CD4-positive, alpha-beta T cell (primary cell): ENCODE measurements at regions of chr5 and their contacts with region 1.

Region 1: GRCh38 chr5:40367255-40367654 is 312.5 kb upstream of the PTGER4 start:
- DNase-seq: peak in 5 of 14 experiments; percentile 19 to 74 (median 43)
- ATAC-seq: peak; percentile 66
- H3K4me3 ChIP-seq: no peak overlapping the region
- H3K4me3 Mint-ChIP-seq: no peak overlapping the region
- H3K27ac ChIP-seq: no peak overlapping the region
- H3K27ac Mint-ChIP-seq: peak overlapping the region; percentile 17
- H3K4me1 ChIP-seq: no peaks in the 10 kb centered on the region
- H3K4me1 Mint-ChIP-seq: peaks cover 7% of the 10 kb centered on the region
- H3K27me3 ChIP-seq: no peaks in the 10 kb centered on the region
- H3K27me3 Mint-ChIP-seq: no peaks in the 10 kb centered on the region
- CTCF ChIP-seq: no peak

Region 2: DNA sequence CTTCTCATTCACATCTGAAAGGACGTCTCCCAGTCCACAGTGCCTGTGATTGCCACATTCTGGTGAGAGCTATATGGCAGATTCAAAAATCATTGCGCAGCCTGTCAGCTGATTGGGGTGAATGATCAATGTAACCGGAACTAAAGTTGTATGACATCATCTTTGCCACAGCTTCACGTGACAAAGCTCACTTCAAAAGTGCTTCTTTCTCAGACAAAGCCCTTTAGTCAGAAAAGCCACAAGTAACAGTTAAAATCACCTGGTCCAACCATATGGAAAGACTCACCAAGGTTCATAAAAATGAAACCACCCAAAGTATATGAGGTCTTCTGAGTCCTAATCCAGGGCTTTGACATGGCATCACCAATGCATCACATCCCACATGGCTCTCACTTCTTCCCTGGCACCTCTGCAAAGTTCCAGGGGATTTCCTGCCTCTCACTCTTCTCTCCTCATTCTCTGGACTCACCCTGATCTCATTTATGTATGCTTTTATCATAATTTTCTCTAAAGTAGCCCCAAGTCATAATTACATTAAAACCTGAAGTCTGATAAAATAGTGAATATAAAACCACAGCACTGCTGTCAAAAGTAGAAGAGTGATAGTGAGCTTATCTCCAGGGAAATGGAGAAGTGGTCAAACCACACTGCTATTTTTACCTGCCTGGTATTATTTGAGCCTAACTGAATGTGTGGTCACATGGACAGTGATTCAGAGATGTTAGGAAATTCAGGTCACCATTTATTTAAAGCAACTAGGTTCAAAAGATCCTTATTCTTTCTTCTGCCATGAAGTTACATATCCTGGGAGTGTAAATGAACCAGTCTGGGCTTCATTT is 119.4 kb after region 1 on chr5:
- CTCF ChIA-PET with region 1: no interaction called
- POLR2A ChIA-PET with region 1: no interaction called
- intact Hi-C with region 1: loop called in 1 of 2 experiments (anchors 5 kb)
- DNase-seq: peak in 11 of 14 experiments; percentile 1 to 88 (median 19)
- ATAC-seq: peak; percentile 85
- H3K4me3 ChIP-seq: no peak overlapping the region
- H3K4me3 Mint-ChIP-seq: peak overlapping the region; percentile 26
- H3K27ac ChIP-seq: peak overlapping the region in 1 of 2 donors; percentile 8
- H3K27ac Mint-ChIP-seq: peak overlapping the region; percentile 64
- H3K4me1 ChIP-seq: peaks cover 5% of the 10 kb centered on the region
- H3K4me1 Mint-ChIP-seq: peaks cover 42% of the 10 kb centered on the region
- H3K27me3 ChIP-seq: no peaks in the 10 kb centered on the region
- H3K27me3 Mint-ChIP-seq: no peaks in the 10 kb centered on the region
- CTCF ChIP-seq: no peak

Region 3: DNA sequence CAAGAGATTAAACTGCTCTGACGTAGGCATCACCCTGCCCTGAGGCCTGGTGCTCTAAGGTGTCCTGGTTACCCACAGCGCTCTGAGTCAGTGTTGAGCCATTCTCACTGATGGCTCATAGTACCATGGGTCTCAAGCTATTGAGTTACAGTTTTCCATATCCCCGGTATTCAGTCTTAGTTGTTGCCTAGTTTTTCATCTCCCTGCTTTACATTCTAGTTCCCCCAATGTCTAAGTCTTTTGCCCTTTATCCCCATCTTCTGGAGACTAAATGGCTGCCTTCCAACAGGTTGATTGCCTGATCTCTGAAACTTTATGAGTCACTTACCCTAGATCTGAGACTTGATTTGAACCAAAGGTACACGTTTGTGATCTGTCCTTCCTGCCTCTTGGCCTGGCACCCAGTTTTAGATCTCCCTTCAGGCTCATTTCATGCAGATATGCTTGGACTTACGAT is 151.3 kb after region 1 on chr5:
- CTCF ChIA-PET with region 1: no interaction called
- POLR2A ChIA-PET with region 1: no interaction called
- intact Hi-C with region 1: no loop called
- DNase-seq: no peak
- ATAC-seq: no peak
- H3K4me3 ChIP-seq: no peak overlapping the region
- H3K4me3 Mint-ChIP-seq: no peak overlapping the region
- H3K27ac ChIP-seq: no peak overlapping the region
- H3K27ac Mint-ChIP-seq: no peak overlapping the region
- H3K4me1 ChIP-seq: peaks cover 21% of the 10 kb centered on the region
- H3K4me1 Mint-ChIP-seq: peaks cover 49% of the 10 kb centered on the region
- H3K27me3 ChIP-seq: no peaks in the 10 kb centered on the region
- H3K27me3 Mint-ChIP-seq: no peaks in the 10 kb centered on the region
- CTCF ChIP-seq: no peak